Psoas muscle (tissue), 8 donors: ENCODE measurements at regions of chr16 and their contacts with region 1.

Region 1: GRCh38 chr16:8797364-8798173 is at the starts of genes PMM2 and TMEM186:
- DNase-seq: peak; percentile 96 to 98
- ATAC-seq: peak; percentile 98 to 100 (median 99)
- H3K4me3 ChIP-seq: peak within 1 kb of the TSS; percentile 100
- H3K27ac ChIP-seq: peak within 1 kb of the TSS; percentile 93
- H3K4me1 ChIP-seq: peaks cover 22% of the 10 kb centered on the region
- H3K27me3 ChIP-seq: no peaks in the 10 kb centered on the region
- CTCF ChIP-seq: no peak
- total RNA-seq, gene PMM2: 8.5 to 32.3 (median 21.0) TPM
- total RNA-seq, gene TMEM186: 10.6 to 17.3 (median 12.4) TPM

Region 2: DNA sequence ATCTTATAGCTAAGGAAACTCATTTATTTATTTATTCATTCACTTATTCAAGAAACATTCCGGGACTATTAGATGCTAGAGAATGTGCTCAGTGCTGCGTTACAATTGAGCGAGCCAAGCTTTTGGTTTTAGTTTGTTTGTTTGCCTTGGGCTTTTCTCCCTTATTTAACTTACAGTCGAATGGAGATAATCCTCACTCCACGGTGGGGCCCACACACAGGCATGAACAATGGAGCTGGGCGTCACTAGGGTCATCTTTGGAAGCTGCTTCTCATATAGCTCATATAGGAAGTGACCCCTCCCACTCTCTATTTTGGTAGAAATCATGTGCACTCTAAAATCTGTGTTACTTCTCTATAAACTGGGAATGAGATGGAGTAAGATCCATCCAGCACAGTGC is 417.3 kb before region 1 on chr16:
- intact Hi-C with region 1: no loop called
- DNase-seq: no peak
- ATAC-seq: no peak
- H3K4me3 ChIP-seq: no peak overlapping the region
- H3K27ac ChIP-seq: no peak overlapping the region
- H3K4me1 ChIP-seq: no peaks in the 10 kb centered on the region
- H3K27me3 ChIP-seq: no peaks in the 10 kb centered on the region
- CTCF ChIP-seq: no peak

Region 3: GRCh38 chr16:8567750-8568617 is 229.6 kb before region 1 on chr16:
- intact Hi-C with region 1: loop called in 1 of 2 experiments (anchors 5 kb)
- DNase-seq: peak; percentile 61 to 70
- ATAC-seq: peak; percentile 67 to 88 (median 84)
- H3K4me3 ChIP-seq: no peak overlapping the region
- H3K27ac ChIP-seq: no peak overlapping the region
- H3K4me1 ChIP-seq: no peaks in the 10 kb centered on the region
- H3K27me3 ChIP-seq: peaks cover 0 to 29% (median 5%) of the 10 kb centered on the region in 3 donors
- CTCF ChIP-seq: peak; percentile 96

Region 4: GRCh38 chr16:8660841-8661301 is 136.7 kb before region 1 on chr16:
- intact Hi-C with region 1: loop called in 1 of 2 experiments (anchors 10 kb)
- DNase-seq: peak; percentile 53 to 74
- ATAC-seq: peak; percentile 73 to 90 (median 83)
- H3K4me3 ChIP-seq: no peak overlapping the region
- H3K27ac ChIP-seq: no peak overlapping the region
- H3K4me1 ChIP-seq: no peaks in the 10 kb centered on the region
- H3K27me3 ChIP-seq: no peaks in the 10 kb centered on the region
- CTCF ChIP-seq: peak; percentile 62

Region 5: DNA sequence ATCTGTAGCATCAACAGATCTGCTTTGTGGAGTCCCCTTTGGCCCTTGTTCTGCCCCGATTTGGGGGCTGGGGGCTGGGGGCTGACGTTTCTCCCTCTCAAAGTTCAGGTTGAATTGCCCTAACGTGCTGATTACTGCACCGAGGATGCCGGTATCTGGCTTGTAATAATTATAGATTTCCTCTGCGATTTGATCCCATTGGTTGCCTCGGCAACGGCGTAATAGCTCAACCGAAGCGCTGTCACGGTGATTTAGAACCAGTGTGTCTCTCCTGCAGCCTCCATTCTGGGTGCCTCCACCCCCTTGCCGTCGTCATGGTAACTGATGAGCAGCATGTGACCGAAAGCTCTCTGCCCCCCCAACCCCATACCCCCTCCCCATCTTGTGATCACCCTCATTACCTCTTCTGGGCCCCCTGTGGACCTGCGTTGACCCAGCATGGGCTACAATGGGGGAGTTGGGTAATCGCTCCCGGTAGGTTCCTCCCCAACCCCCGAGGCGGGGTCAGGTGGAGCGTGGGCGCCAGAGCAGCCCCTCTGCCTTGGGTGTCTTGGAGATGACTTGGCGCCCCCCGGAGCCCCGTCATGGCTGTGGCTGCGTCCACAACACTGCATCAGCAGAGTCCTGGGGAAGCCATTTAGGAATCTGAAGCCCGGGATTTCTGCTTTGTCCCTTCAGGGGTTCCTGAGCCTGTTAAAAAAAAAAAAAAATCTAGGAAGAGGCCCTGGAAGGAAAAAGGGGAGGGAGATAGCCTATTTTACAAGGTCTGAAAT is 84.8 kb before region 1 on chr16:
- intact Hi-C with region 1: no loop called
- DNase-seq: no peak
- ATAC-seq: no peak
- H3K4me3 ChIP-seq: no peak overlapping the region
- H3K27ac ChIP-seq: no peak overlapping the region
- H3K4me1 ChIP-seq: no peaks in the 10 kb centered on the region
- H3K27me3 ChIP-seq: peaks cover 0 to under 1% (median 0%) of the 10 kb centered on the region in 3 donors
- CTCF ChIP-seq: no peak

Region 6: DNA sequence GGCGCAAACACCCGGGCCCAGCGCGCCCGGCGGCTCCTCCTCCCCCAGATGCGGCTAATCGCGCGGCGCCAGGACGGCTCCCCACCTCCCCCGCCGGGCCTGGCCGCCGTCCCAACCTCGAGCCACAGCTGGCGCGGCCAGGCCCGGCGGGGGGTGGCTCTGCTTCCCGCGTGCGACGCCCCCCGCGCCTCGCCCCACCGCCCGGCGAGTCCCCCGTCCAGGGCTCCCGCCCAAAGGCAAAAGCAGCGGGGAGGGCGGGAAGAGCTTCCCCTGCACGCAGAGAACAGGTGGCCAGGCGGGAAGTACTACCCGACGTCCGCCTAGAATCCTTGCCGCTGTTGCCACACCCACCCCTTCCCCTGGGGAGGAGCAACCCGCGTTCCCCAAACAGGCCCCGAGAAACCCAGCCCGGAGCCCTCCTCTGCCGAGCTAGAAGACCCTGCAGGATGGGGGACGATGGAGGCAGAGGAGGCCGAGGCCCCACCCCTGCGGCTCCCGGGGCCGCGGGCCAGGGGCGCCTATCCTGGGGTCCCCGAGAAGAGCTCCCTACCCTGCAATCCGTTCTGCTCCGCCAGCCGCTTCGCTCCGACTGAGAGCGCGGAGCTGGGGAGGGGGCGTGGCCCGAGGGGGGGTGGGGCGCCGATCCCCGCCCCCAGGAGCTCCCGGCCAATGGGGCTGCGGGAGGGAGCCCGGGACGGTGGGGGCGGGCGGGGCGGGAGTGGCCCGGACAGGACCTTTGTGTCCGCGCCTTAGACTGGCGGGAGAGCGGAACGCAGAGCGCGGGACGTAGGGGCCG is 71.0 kb after region 1 on chr16 and contains the start of gene CARHSP1:
- intact Hi-C with region 1: loop called in 1 of 2 experiments (anchors 5 kb)
- DNase-seq: peak; percentile 85 to 91
- ATAC-seq: peak; percentile 87 to 92 (median 90)
- H3K4me3 ChIP-seq: peak within 1 kb of the TSS; percentile 72
- H3K27ac ChIP-seq: peak within 1 kb of the TSS; percentile 60
- H3K4me1 ChIP-seq: peaks cover 6% of the 10 kb centered on the region
- H3K27me3 ChIP-seq: peaks cover 0 to 34% (median 8%) of the 10 kb centered on the region in 3 donors
- CTCF ChIP-seq: no peak
- total RNA-seq, gene CARHSP1: 9.8 to 23.0 (median 13.5) TPM

Region 7: GRCh38 chr16:9008601-9009260 is 211.2 kb after region 1 on chr16:
- intact Hi-C with region 1: loop called in 1 of 2 experiments (anchors 10 kb)
- DNase-seq: peak; percentile 79 to 82
- ATAC-seq: peak; percentile 90 to 98 (median 94)
- H3K4me3 ChIP-seq: peak overlapping the region; percentile 56
- H3K27ac ChIP-seq: no peak overlapping the region
- H3K4me1 ChIP-seq: no peaks in the 10 kb centered on the region
- H3K27me3 ChIP-seq: no peaks in the 10 kb centered on the region
- CTCF ChIP-seq: peak; percentile 87